CD8-positive, alpha-beta T cell (primary cell): ENCODE measurements at regions of chr6 and their contacts with region 1.

Region 1: GRCh38 chr6:12011276-12012076 is 636 bp upstream of the HIVEP1 start:
- DNase-seq: peak; percentile 92 to 99 (median 96)
- ATAC-seq: peak; percentile 71
- H3K4me3 ChIP-seq: peak overlapping the region in 1 of 2 experiments; percentile 73
- H3K4me3 Mint-ChIP-seq: peak overlapping the region; percentile 91
- H3K27ac ChIP-seq: peak overlapping the region in 1 of 2 experiments; percentile 93
- H3K27ac Mint-ChIP-seq: peak overlapping the region; percentile 94
- H3K4me1 ChIP-seq: peaks cover 28% of the 10 kb centered on the region
- H3K4me1 Mint-ChIP-seq: peaks cover 60% of the 10 kb centered on the region
- H3K27me3 ChIP-seq: no peaks in the 10 kb centered on the region
- H3K27me3 Mint-ChIP-seq: no peaks in the 10 kb centered on the region
- CTCF ChIP-seq: no peak

Region 2: GRCh38 chr6:10747251-10747972 is 1264.1 kb before region 1 on chr6 and contains the start of gene TMEM14B:
- CTCF ChIA-PET with region 1: no interaction called
- POLR2A ChIA-PET with region 1: no interaction called
- intact Hi-C with region 1: loop called (anchors 2 to 10 kb)
- DNase-seq: peak; percentile 98 to 100 (median 99)
- ATAC-seq: peak; percentile 98
- H3K4me3 ChIP-seq: peak within 1 kb of the TSS; percentile 73 to 79
- H3K4me3 Mint-ChIP-seq: peak within 1 kb of the TSS; percentile 96
- H3K27ac ChIP-seq: peak within 1 kb of the TSS; percentile 77 to 79
- H3K27ac Mint-ChIP-seq: peak within 1 kb of the TSS; percentile 97
- H3K4me1 ChIP-seq: peaks cover 33% of the 10 kb centered on the region
- H3K4me1 Mint-ChIP-seq: peaks cover 57% of the 10 kb centered on the region
- H3K27me3 ChIP-seq: no peaks in the 10 kb centered on the region
- H3K27me3 Mint-ChIP-seq: no peaks in the 10 kb centered on the region
- CTCF ChIP-seq: no peak
- total RNA-seq, gene TMEM14B: 36.5 to 41.2 TPM

Region 3: DNA sequence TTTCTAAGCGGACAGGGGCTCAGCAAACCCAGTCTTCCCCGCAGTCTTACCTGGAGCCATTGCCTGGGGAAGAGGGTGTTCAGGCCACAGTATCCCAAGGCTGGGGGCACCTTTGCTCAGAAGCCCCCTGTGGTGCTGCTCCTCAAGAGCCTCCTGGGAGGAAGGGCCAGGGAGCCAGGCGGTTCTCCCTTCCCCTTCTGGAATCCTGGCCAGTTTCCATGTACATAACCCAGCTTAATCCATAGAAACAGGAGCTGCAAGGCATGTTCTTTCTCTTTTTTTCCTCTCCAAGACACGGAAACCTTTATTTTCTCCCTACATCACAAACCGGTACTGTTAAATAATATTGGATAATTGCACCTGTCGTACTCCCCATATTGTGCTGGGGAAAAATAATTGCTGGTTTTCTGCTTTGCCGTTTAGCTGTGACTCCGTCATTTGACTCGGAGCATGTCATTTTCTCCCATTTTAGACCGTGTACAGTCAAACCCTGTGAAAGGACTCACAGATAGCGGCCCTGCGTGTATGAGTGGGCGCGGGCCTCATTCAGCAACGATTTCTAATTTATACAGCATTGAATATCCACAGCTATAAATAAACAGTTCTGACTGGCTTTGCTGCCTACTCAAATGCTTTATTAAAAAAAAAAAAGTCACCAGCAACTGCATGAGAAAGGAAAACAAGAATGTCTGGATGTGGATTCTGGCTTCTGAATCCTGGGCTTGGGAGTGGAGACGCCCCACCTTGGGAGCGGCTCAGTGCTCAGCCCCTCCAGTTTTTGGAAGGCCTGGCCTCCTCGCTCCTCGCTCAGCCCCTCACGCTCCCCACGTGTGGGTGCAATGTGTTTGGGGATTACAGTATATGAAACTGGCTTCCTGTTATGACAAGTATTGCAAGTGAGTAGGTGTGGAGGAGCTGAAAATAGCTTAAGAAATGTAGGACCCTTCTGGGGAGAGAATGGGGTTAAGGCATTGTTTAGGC is 300.2 kb before region 1 on chr6:
- CTCF ChIA-PET with region 1: interaction called, 3 read pairs
- POLR2A ChIA-PET with region 1: no interaction called
- intact Hi-C with region 1: loop called (anchors 2 to 5 kb)
- DNase-seq: peak in 8 of 9 experiments; percentile 10 to 70 (median 30)
- ATAC-seq: peak; percentile 59
- H3K4me3 ChIP-seq: no peak overlapping the region
- H3K4me3 Mint-ChIP-seq: peak overlapping the region; percentile 33
- H3K27ac ChIP-seq: peak overlapping the region; percentile 28 to 46
- H3K27ac Mint-ChIP-seq: peak overlapping the region; percentile 96
- H3K4me1 ChIP-seq: peaks cover 72% of the 10 kb centered on the region
- H3K4me1 Mint-ChIP-seq: peaks cover 74% of the 10 kb centered on the region
- H3K27me3 ChIP-seq: no peaks in the 10 kb centered on the region
- H3K27me3 Mint-ChIP-seq: no peaks in the 10 kb centered on the region
- CTCF ChIP-seq: no peak

Region 4: GRCh38 chr6:11971154-11971553 is 40.3 kb before region 1 on chr6:
- CTCF ChIA-PET with region 1: no interaction called
- POLR2A ChIA-PET with region 1: no interaction called
- intact Hi-C with region 1: loop called in 1 of 2 experiments (anchors 5 kb)
- DNase-seq: no peak
- ATAC-seq: no peak
- H3K4me3 ChIP-seq: no peak overlapping the region
- H3K4me3 Mint-ChIP-seq: no peak overlapping the region
- H3K27ac ChIP-seq: no peak overlapping the region
- H3K27ac Mint-ChIP-seq: no peak overlapping the region
- H3K4me1 ChIP-seq: no peaks in the 10 kb centered on the region
- H3K4me1 Mint-ChIP-seq: peaks cover 11% of the 10 kb centered on the region
- H3K27me3 ChIP-seq: no peaks in the 10 kb centered on the region
- H3K27me3 Mint-ChIP-seq: no peaks in the 10 kb centered on the region
- CTCF ChIP-seq: no peak

Region 5: GRCh38 chr6:11989386-11989785 is 22.1 kb before region 1 on chr6:
- CTCF ChIA-PET with region 1: no interaction called
- POLR2A ChIA-PET with region 1: no interaction called
- intact Hi-C with region 1: no loop called
- DNase-seq: no peak
- ATAC-seq: no peak
- H3K4me3 ChIP-seq: no peak overlapping the region
- H3K4me3 Mint-ChIP-seq: no peak overlapping the region
- H3K27ac ChIP-seq: no peak overlapping the region
- H3K27ac Mint-ChIP-seq: no peak overlapping the region
- H3K4me1 ChIP-seq: no peaks in the 10 kb centered on the region
- H3K4me1 Mint-ChIP-seq: no peaks in the 10 kb centered on the region
- H3K27me3 ChIP-seq: no peaks in the 10 kb centered on the region
- H3K27me3 Mint-ChIP-seq: peaks cover 2% of the 10 kb centered on the region
- CTCF ChIP-seq: no peak

Region 6: GRCh38 chr6:12058170-12058961 is 46.9 kb after region 1 on chr6:
- CTCF ChIA-PET with region 1: no interaction called
- POLR2A ChIA-PET with region 1: no interaction called
- intact Hi-C with region 1: loop called in 1 of 2 experiments (anchors 2 kb)
- DNase-seq: no peak
- ATAC-seq: no peak
- H3K4me3 ChIP-seq: no peak overlapping the region
- H3K4me3 Mint-ChIP-seq: no peak overlapping the region
- H3K27ac ChIP-seq: no peak overlapping the region
- H3K27ac Mint-ChIP-seq: no peak overlapping the region
- H3K4me1 ChIP-seq: peaks cover 10% of the 10 kb centered on the region
- H3K4me1 Mint-ChIP-seq: peaks cover 47% of the 10 kb centered on the region
- H3K27me3 ChIP-seq: no peaks in the 10 kb centered on the region
- H3K27me3 Mint-ChIP-seq: no peaks in the 10 kb centered on the region
- CTCF ChIP-seq: no peak

Region 7: DNA sequence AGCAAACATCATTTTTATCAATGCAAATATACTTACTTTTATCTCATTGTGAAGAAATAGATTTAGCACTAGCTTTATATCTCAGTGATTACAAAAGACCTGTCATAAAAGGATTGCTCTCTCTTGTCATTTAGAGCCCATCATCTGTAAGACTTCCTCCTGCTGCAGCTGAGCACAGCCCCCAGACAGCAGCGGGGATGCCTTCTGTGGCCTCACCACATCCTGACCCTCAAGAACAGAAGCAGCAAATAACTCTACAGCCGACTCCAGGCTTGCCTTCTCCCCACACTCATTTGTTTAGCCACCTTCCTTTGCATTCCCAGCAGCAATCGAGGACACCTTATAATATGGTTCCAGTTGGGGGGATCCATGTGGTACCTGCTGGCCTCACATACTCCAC is 151.7 kb after region 1 on chr6:
- CTCF ChIA-PET with region 1: no interaction called
- POLR2A ChIA-PET with region 1: no interaction called
- intact Hi-C with region 1: loop called in 1 of 2 experiments (anchors 1 kb)
- DNase-seq: peak; percentile 10 to 76 (median 59)
- ATAC-seq: peak; percentile 96
- H3K4me3 ChIP-seq: no peak overlapping the region
- H3K4me3 Mint-ChIP-seq: peak overlapping the region; percentile 33
- H3K27ac ChIP-seq: no peak overlapping the region
- H3K27ac Mint-ChIP-seq: peak overlapping the region; percentile 52
- H3K4me1 ChIP-seq: peaks cover 19% of the 10 kb centered on the region
- H3K4me1 Mint-ChIP-seq: peaks cover 33% of the 10 kb centered on the region
- H3K27me3 ChIP-seq: no peaks in the 10 kb centered on the region
- H3K27me3 Mint-ChIP-seq: no peaks in the 10 kb centered on the region
- CTCF ChIP-seq: no peak